Naive thymus-derived CD4-positive, alpha-beta T cell (primary cell): ENCODE measurements at regions of chr5 and their contacts with region 1.

Region 1: DNA sequence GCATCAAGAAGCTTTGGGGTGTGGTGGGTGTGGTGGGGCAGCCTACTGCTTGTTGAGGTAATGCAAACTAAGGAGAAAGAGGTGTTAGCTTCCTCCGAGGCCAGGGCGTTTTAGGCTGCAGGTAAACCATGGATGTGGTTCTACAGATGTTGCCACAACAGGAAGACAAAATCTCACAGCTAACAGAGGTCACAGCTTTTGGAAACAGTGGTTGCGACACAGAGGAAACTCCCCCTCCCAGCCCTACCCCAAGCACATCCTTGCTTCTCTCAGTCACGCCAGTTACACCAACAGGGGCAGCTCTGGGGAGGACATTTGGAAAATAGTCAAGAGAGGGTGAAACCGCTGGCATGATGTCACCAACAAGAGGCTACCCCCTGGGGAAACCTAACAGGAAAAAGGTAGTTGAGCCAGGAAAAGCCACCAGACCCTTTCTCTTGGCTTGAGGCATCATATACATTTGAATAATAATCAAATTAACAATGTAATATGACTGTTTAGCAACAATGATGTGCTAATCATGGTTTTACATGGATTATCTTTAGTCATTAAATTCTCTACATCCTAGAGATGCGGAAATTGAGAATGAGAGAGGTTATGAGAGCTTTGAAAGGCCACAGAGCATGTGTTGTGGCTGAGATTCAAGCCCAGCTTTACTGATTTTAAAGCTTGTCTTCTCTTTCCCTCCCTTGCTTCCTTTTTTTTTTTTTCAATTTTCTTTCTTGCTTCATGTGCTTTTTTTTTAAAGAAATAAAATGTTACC is 82.2 kb upstream of the IL12B start:
- DNase-seq: peak; percentile 9 to 88 (median 80)
- ATAC-seq: peak; percentile 94
- H3K4me3 ChIP-seq: no peak overlapping the region
- H3K4me3 Mint-ChIP-seq: peak overlapping the region; percentile 26 to 80 (median 73)
- H3K27ac ChIP-seq: peak overlapping the region; percentile 22
- H3K27ac Mint-ChIP-seq: peak overlapping the region; percentile 80 to 97 (median 92)
- H3K4me1 ChIP-seq: peaks cover 30 to 42% of the 10 kb centered on the region in 2 donors
- H3K4me1 Mint-ChIP-seq: peaks cover 28 to 62% (median 42%) of the 10 kb centered on the region in 7 donors
- H3K27me3 ChIP-seq: no peaks in the 10 kb centered on the region
- H3K27me3 Mint-ChIP-seq: peaks cover 0 to 19% (median 0%) of the 10 kb centered on the region in 5 donors

Region 2: GRCh38 chr5:159156426-159157238 is 255.8 kb before region 1 on chr5:
- CTCF ChIA-PET with region 1: interaction called, 3 read pairs
- POLR2A ChIA-PET with region 1: no interaction called
- intact Hi-C with region 1: loop called in 1 of 2 experiments (anchors 5 kb)
- DNase-seq: peak in 7 of 9 donors; percentile 53 to 77 (median 72)
- ATAC-seq: peak; percentile 89
- H3K4me3 ChIP-seq: no peak overlapping the region
- H3K4me3 Mint-ChIP-seq: peak overlapping the region in 1 of 10 donors; percentile 50
- H3K27ac ChIP-seq: peak overlapping the region; percentile 16
- H3K27ac Mint-ChIP-seq: peak overlapping the region; percentile 26 to 92 (median 85)
- H3K4me1 ChIP-seq: peaks cover 8 to 9% of the 10 kb centered on the region in 2 donors
- H3K4me1 Mint-ChIP-seq: peaks cover 0 to 35% (median 23%) of the 10 kb centered on the region in 7 donors
- H3K27me3 ChIP-seq: no peaks in the 10 kb centered on the region
- H3K27me3 Mint-ChIP-seq: no peaks in the 10 kb centered on the region

Region 3: DNA sequence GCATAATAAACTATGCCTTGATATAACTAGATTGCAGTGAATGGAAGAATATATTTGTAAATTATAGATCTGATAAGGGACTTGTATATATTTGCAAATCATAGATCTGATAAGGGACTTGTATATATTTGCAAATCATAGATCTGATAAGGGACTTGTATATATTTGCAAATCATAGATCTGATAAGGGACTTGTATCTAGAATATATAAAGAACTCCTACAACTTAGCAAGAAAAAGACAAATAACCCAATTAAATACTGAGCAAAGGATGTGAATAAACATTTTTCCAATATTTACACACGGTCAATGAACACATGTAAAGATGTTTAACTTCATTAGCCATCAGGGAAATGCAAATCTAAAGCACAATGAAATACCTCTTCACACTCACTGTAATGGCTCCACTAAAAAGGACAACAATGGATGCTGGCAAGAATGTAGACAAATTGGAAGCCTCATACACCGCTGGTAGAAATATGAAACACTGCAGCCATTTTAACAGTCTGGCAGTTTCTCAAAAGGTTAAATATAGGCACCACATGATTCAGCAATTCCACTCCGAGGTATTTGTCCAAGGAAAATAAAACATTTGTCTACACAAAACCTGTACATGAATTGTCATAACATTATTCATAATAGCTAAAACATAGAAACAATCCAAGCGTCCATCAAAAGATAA is 223.3 kb before region 1 on chr5:
- CTCF ChIA-PET with region 1: no interaction called
- POLR2A ChIA-PET with region 1: no interaction called
- intact Hi-C with region 1: no loop called
- DNase-seq: no peak
- ATAC-seq: no peak
- H3K4me3 ChIP-seq: no peak overlapping the region
- H3K4me3 Mint-ChIP-seq: no peak overlapping the region
- H3K27ac ChIP-seq: no peak overlapping the region
- H3K27ac Mint-ChIP-seq: peak overlapping the region in 4 of 9 donors; percentile 17 to 49 (median 26)
- H3K4me1 ChIP-seq: no peaks in the 10 kb centered on the region
- H3K4me1 Mint-ChIP-seq: peaks cover 25 to 80% (median 66%) of the 10 kb centered on the region in 7 donors
- H3K27me3 ChIP-seq: no peaks in the 10 kb centered on the region
- H3K27me3 Mint-ChIP-seq: no peaks in the 10 kb centered on the region

Region 4: DNA sequence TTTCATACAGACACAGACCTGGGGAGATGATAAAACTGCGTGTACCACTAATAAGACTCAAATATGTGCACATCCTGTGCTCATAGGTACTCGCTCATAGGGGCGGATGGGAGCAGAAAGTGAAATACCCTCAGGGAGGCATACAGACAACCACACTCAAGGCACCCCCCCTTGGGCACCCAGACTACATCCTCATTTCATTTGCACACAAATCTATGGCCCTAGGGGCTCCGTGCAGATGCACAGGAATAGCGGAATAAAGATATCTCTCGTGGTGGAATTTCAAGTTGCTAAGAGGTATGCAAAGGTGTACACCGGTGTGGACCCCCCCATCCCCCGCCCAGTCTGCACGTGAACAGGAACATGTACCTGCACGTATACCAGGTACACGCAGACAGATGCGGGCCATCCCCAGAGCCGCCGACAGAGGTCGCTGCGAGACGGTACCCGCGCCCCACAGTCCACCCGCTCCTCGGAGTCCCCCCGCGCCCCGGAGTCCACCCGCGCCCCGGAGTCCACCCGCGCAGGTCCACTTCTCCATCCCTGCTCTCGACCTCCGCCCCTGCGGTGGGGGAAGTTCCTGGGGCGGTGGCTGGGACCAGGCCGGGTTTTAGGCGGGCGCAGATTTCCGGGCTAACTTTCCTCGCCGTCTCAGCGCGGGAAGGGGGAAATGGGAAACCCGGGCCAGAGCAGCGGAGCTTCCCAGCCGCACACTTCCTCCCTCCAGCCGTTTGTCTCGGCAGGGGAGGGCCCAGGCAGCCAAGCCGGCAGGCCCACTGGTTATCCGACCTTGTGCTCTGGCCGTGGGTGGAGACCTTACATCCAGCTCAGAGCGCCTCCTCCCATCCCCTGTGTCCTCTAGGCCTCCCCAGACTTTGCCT is 81.1 kb before region 1 on chr5:
- CTCF ChIA-PET with region 1: interaction called, 3 read pairs
- POLR2A ChIA-PET with region 1: no interaction called
- intact Hi-C with region 1: loop called in 1 of 2 experiments (anchors 1 kb)
- DNase-seq: peak; percentile 43 to 79 (median 65)
- ATAC-seq: peak; percentile 93
- H3K4me3 ChIP-seq: peak overlapping the region; percentile 46
- H3K4me3 Mint-ChIP-seq: peak overlapping the region; percentile 66 to 80 (median 74)
- H3K27ac ChIP-seq: peak overlapping the region; percentile 22
- H3K27ac Mint-ChIP-seq: peak overlapping the region in 6 of 9 donors; percentile 9 to 75 (median 64)
- H3K4me1 ChIP-seq: peaks cover 0 to 4% of the 10 kb centered on the region in 2 donors
- H3K4me1 Mint-ChIP-seq: peaks cover 3 to 52% (median 23%) of the 10 kb centered on the region in 7 donors
- H3K27me3 ChIP-seq: no peaks in the 10 kb centered on the region
- H3K27me3 Mint-ChIP-seq: peaks cover 0 to 35% (median 0%) of the 10 kb centered on the region in 5 donors

Region 5: DNA sequence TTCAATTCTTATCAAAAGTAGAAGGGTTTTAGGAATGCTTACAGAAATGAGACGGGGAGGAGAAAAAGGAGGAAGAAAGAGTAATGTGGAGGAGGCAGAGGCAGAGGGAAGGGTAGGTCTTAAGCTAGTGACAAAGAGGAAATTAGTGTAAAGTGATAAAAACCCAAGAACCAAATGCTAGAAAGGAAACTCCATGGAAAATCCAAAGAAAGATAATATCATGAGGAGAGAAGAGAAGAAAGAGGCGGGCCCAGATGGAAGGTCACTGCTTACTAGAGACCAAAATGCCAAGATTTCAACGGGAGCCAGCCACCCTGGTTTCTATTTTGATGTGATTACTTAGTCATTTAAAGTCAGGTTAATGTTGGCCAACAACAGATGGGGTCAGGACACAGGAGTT is 13.5 kb before region 1 on chr5:
- CTCF ChIA-PET with region 1: no interaction called
- POLR2A ChIA-PET with region 1: interaction called, 4 read pairs
- intact Hi-C with region 1: loop called in 1 of 2 experiments (anchors 1 kb)
- DNase-seq: no peak
- ATAC-seq: no peak
- H3K4me3 ChIP-seq: no peak overlapping the region
- H3K4me3 Mint-ChIP-seq: no peak overlapping the region
- H3K27ac ChIP-seq: no peak overlapping the region
- H3K27ac Mint-ChIP-seq: no peak overlapping the region
- H3K4me1 ChIP-seq: no peaks in the 10 kb centered on the region
- H3K4me1 Mint-ChIP-seq: peaks cover 0 to 2% (median 0%) of the 10 kb centered on the region in 7 donors
- H3K27me3 ChIP-seq: no peaks in the 10 kb centered on the region
- H3K27me3 Mint-ChIP-seq: peaks cover 0 to 51% (median 5%) of the 10 kb centered on the region in 5 donors

Region 6: DNA sequence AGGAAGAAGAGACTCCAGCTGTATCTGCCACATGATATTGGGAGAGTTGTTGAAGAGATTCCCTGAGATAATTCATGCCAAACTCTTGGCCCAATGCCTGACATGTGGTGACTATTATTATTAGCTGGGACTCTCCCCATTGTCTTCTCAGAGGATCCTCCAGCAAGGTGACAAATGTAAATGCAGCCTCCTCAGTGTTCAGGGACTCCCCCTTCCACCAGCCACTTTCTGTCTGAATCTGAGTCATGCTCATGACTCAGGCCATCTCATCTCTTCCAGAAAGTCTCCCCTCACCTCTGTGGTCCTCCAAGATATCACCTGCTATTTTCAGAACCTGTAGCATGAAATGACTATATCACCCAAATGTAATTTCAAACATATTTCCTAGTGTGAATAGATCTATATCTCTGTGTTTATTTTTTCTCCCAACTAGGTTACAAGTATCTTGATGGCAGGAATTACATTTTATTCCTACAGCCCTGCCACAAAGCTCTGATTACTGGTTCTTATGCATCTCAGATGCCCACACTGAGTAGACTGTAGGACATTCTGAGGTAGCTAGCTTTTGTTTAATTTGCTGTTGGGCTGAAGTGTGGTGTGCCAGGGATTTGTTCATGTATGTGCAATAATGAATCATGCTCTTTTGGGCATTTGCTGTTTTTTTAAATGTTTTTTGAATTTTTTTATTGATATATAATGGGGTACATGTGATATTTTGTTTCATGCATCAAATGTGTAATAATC is 44.4 kb after region 1 on chr5:
- CTCF ChIA-PET with region 1: no interaction called
- POLR2A ChIA-PET with region 1: no interaction called
- intact Hi-C with region 1: loop called in 1 of 2 experiments (anchors 1 kb)
- DNase-seq: peak in 1 of 9 donors; percentile 56
- ATAC-seq: peak; percentile 50
- H3K4me3 ChIP-seq: no peak overlapping the region
- H3K4me3 Mint-ChIP-seq: no peak overlapping the region
- H3K27ac ChIP-seq: no peak overlapping the region
- H3K27ac Mint-ChIP-seq: no peak overlapping the region
- H3K4me1 ChIP-seq: no peaks in the 10 kb centered on the region
- H3K4me1 Mint-ChIP-seq: peaks cover 0 to 40% (median 0%) of the 10 kb centered on the region in 7 donors
- H3K27me3 ChIP-seq: no peaks in the 10 kb centered on the region
- H3K27me3 Mint-ChIP-seq: peaks cover 0 to 70% (median 4%) of the 10 kb centered on the region in 5 donors

Region 7: GRCh38 chr5:160119142-160119904 is 706.9 kb after region 1 on chr5 and contains the start of gene PWWP2A:
- CTCF ChIA-PET with region 1: no interaction called
- POLR2A ChIA-PET with region 1: no interaction called
- intact Hi-C with region 1: loop called in 1 of 2 experiments (anchors 1 kb)
- DNase-seq: peak; percentile 86 to 100 (median 99)
- ATAC-seq: peak; percentile 96
- H3K4me3 ChIP-seq: peak within 1 kb of the TSS; percentile 79
- H3K4me3 Mint-ChIP-seq: peak within 1 kb of the TSS; percentile 83 to 99 (median 94)
- H3K27ac ChIP-seq: peak within 1 kb of the TSS; percentile 83
- H3K27ac Mint-ChIP-seq: peak within 1 kb of the TSS; percentile 83 to 98 (median 94)
- H3K4me1 ChIP-seq: peaks cover 0 to 5% of the 10 kb centered on the region in 2 donors
- H3K4me1 Mint-ChIP-seq: peaks cover 0 to 25% (median 20%) of the 10 kb centered on the region in 7 donors
- H3K27me3 ChIP-seq: no peaks in the 10 kb centered on the region
- H3K27me3 Mint-ChIP-seq: peaks cover 0 to 8% (median 0%) of the 10 kb centered on the region in 5 donors
- total RNA-seq, gene PWWP2A: 21.2 to 43.6 (median 29.5) TPM